ENCODE measurements at regions of chr10 and their contacts with region 1.

Region 1: DNA sequence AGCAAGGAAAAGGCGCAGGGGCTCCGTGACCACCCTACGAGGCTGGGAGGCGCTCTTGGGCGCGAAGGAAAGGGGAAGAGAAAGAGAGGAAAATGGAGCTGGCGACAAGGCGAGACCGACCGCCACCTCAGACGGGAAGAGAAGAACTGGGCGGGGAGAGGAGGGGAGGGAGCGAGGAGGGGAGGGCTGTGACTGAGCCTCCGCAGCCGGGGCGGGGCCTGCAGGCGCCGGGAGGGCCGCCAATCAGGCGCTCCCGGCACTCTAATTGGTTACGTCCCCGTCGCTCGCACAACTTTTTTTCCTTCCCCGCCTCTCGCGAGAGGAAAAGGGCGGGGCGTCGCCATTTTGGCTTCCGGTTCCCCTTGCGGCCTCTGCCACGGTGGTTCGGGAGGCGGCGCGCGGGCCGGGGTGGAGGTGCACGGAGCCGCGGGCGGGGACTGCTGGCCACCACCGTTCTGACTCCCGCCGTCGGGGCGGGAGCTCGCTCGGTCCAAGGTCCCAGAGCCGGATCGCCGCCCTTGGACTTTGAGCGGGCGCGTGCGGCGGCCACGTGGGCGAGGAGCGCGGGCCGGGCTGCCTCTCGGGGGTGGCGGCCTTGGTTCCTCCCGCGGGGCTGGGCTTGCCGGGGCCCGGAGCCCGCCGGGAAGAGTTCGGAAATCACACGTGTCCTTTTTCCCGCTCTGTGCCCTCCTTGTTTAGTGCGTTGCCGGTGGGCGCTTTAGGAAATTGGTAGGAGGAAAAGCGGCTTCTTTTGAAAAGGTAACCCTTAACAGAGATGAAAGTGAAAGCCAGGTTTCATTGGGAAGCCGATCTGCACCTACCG is at the start of gene GDI2:
- DNase-seq: peak; percentile 96
- H3K4me3 ChIP-seq: peak within 1 kb of the TSS; percentile 93 to 99 (median 95)
- H3K27ac ChIP-seq: peak within 1 kb of the TSS; percentile 93 to 98 (median 97)
- H3K4me1 ChIP-seq: peaks cover 32 to 36% of the 10 kb centered on the region in 2 donors
- H3K27me3 ChIP-seq: no peaks in the 10 kb centered on the region
- CTCF ChIP-seq: peak in 1 of 6 experiments; percentile 8
- POLR2A ChIP-seq: peak; percentile 52 to 89
- total RNA-seq, gene GDI2: 189 to 281 (median 236) TPM

Region 2: GRCh38 chr10:5525561-5526341 is 287.7 kb before region 1 on chr10:
- intact Hi-C with region 1: no loop called
- DNase-seq: no peak
- H3K4me3 ChIP-seq: no peak overlapping the region
- H3K27ac ChIP-seq: no peak overlapping the region
- H3K4me1 ChIP-seq: no peaks in the 10 kb centered on the region
- H3K27me3 ChIP-seq: no peaks in the 10 kb centered on the region
- CTCF ChIP-seq: no peak
- POLR2A ChIP-seq: no peak

Region 3: DNA sequence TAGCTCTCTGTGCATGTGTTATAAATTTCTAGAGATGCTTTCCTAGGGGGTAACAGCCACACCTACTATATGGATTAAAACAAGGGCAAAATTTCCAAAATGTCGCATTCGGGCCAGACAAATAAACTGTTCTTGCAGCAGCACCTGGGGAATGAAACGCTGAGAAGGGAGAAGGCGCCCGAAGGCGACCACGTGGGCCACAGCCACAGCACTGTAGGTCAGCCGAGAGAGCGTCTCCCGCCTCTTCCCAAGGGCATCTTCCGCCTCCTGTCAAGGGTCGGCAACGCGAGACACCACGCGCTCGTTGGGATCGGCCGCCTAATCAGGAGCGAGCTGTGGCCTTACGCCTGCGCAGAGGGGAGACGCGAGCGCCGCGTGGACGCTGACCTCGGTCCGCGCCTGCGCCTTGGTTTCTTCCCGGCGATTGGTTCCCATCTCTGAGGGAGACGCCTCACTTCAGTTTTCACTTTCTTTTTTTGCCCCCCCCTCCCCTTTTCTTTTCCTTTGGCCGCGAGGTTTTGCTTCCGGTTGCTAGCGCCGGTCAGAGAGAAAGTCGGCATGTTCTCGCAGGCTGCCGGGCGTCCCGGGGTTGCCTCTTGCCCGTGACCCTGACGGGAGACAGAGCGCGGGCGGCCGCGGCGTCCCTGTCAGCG is 129.1 kb before region 1 on chr10 and contains the start of gene TASOR2:
- intact Hi-C with region 1: loop called (anchors 10 kb)
- DNase-seq: peak; percentile 98 to 99
- H3K4me3 ChIP-seq: peak within 1 kb of the TSS; percentile 76 to 98 (median 96)
- H3K27ac ChIP-seq: peak within 1 kb of the TSS; percentile 50 to 86 (median 71)
- H3K4me1 ChIP-seq: peaks cover 4 to 14% of the 10 kb centered on the region in 2 donors
- H3K27me3 ChIP-seq: no peaks in the 10 kb centered on the region
- CTCF ChIP-seq: no peak
- POLR2A ChIP-seq: peak in 1 of 2 donors; percentile 58
- total RNA-seq, gene TASOR2: 73.2 to 132 (median 96.3) TPM

Region 4: DNA sequence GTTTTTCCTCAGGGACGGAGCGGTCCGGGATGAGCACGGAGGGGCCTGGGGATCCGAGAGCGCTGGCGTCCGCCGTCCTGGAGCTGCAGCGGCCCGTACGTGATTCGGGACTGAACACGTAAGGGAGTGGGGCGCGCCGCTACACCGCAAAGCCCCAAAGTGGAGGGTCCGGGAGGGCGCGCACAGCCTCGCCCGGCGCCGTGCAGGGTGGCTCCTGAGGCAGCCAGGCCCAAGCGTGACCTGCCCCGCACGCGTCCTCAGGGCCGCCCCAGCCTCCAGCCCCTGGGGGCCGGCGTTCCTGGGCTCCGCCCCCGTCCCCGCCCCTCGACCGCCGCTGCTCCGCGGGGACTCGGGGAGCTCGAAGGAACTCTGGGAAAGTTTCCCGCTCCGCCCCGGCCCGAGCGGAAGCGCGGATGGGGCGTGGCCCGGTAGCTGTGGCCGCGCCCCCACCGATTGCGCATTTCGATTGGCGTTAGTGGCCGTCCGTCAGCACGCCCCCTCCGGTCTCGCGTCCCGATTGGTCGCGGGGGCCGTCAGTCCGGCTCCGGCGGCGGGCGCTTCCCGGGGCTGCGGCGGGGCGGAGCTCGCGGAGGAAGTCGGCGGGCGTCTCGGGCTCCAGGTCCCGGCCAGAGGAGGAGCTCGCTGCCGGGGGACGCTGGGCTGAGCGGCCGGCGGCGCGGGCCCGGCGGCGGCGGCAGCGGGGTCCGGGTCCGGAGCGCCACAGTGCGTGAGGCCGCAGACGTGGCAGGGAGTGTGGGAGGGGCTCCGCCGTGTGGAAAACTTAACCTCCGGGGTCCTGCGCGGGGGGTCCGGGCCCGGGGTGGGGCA is 76.3 kb after region 1 on chr10 and contains the starts of genes ANKRD16 and FBH1:
- intact Hi-C with region 1: loop called (anchors 5 kb)
- DNase-seq: peak; percentile 98
- H3K4me3 ChIP-seq: peak within 1 kb of the TSS; percentile 88 to 96 (median 91)
- H3K27ac ChIP-seq: peak within 1 kb of the TSS in 2 of 3 donors; percentile 47 to 65
- H3K4me1 ChIP-seq: peaks cover 17 to 23% of the 10 kb centered on the region in 2 donors
- H3K27me3 ChIP-seq: no peaks in the 10 kb centered on the region
- CTCF ChIP-seq: no peak
- POLR2A ChIP-seq: peak in 1 of 2 donors; percentile 86
- total RNA-seq, gene ANKRD16: 8.0 to 19.8 (median 13.1) TPM
- total RNA-seq, gene FBH1: 88.3 to 100 (median 94.8) TPM